HAP-1 (cell line): ENCODE measurements at regions of chr15 and their contacts with region 1.

Region 1: DNA sequence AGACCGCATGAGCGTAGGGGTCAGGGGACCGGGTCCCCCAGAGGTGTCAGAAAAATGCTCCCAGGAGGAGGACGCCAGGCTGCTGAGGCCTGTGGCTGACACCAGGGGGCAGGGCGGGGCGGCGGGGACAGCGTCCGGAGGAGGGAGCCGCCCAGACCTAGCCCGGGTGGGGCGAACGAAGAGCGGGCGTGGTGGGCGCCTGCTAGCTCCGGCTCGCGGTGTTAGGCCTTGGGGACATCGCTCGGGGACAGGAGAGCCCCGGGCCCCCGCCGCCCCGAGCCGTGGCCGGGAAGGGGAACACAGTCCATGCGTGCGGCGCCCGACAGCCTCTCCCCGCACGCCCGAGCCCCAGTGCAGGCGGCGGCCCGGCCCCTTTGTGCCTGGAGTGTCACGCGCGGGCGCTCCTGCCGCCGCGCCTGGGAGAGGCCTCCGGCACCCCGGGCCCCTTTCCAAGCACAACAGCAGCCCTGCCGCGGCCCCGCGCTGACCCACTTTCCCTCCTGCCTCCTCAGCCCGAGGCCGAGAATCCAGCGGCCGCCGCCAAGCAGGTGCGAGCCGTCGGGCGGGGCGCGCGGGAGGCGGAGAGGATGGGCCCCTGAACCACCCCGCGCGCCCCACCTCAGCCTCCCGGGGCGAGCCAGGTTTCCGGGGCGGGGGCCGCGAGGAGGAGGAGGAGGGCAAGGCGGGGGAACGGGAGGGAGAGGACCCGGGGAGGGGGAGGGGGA is 111.0 kb upstream of the KLF13 start:
- DNase-seq: peak; percentile 57 to 92
- H3K4me3 ChIP-seq: peak overlapping the region; percentile 48
- H3K4me1 ChIP-seq: peaks cover 12% of the 10 kb centered on the region; the same call in 1 of the 2 replicates
- H3K27me3 ChIP-seq: no peaks in the 10 kb centered on the region

Region 2: GRCh38 chr15:31128919-31129768 is 86.5 kb before region 1 on chr15:
- in situ Hi-C with region 1: no loop called
- DNase-seq: peak; percentile 64 to 90
- H3K4me3 ChIP-seq: no peak overlapping the region
- H3K4me1 ChIP-seq: no peaks in the 10 kb centered on the region
- H3K27me3 ChIP-seq: no peaks in the 10 kb centered on the region

Region 3: GRCh38 chr15:31326156-31326732 is 110.6 kb after region 1 on chr15:
- in situ Hi-C with region 1: loop called (anchors 10 kb)
- DNase-seq: peak; percentile 88 to 98
- H3K4me3 ChIP-seq: peak overlapping the region; percentile 62
- H3K4me1 ChIP-seq: peaks cover 3% of the 10 kb centered on the region
- H3K27me3 ChIP-seq: no peaks in the 10 kb centered on the region

Region 4: GRCh38 chr15:31488426-31489204 is 273.0 kb after region 1 on chr15:
- in situ Hi-C with region 1: loop called (anchors 5 kb)
- DNase-seq: peak; percentile 60 to 67
- H3K4me3 ChIP-seq: no peak overlapping the region
- H3K4me1 ChIP-seq: no peaks in the 10 kb centered on the region
- H3K27me3 ChIP-seq: no peaks in the 10 kb centered on the region